Mammary epithelial cell (primary cell): ENCODE measurements at regions of chr3 and their contacts with region 1.

Region 1: GRCh38 chr3:140898340-140899180 is 43.1 kb upstream of the SLC25A36 start:
- DNase-seq: peak; percentile 75
- H3K4me3 ChIP-seq: no peak overlapping the region
- H3K27ac ChIP-seq: no peak overlapping the region
- H3K4me1 ChIP-seq: peaks cover 3% of the 10 kb centered on the region
- H3K27me3 ChIP-seq: peaks cover 2% of the 10 kb centered on the region
- CTCF ChIP-seq: peak; percentile 64 to 68

Region 2: DNA sequence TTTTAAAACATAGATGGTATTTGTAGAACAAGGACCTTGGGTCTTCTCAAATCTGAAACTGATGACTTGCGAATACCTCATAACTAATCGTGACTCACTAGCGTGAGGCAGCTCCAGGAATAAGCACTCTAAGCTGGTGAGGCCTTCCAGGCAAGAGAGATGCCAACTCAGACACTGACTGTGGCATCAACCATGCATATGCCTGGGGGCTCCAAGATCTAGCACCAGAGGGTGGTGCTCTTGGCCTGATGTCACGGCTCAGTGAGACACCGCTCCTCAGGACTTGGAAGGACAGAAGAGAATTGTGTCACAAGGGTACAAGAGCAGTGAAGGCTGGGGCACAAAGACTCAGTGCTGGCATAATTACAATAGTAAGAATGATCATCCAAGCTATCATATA is 345.7 kb before region 1 on chr3:
- CTCF ChIA-PET with region 1: no interaction called
- dilution Hi-C with region 1: no loop called
- in situ Hi-C with region 1: no loop called
- intact Hi-C with region 1: no loop called
- DNase-seq: peak; percentile 65
- H3K4me3 ChIP-seq: no peak overlapping the region
- H3K27ac ChIP-seq: no peak overlapping the region
- H3K4me1 ChIP-seq: no peaks in the 10 kb centered on the region
- H3K27me3 ChIP-seq: no peaks in the 10 kb centered on the region
- CTCF ChIP-seq: peak in 1 of 2 donors; percentile 13

Region 3: DNA sequence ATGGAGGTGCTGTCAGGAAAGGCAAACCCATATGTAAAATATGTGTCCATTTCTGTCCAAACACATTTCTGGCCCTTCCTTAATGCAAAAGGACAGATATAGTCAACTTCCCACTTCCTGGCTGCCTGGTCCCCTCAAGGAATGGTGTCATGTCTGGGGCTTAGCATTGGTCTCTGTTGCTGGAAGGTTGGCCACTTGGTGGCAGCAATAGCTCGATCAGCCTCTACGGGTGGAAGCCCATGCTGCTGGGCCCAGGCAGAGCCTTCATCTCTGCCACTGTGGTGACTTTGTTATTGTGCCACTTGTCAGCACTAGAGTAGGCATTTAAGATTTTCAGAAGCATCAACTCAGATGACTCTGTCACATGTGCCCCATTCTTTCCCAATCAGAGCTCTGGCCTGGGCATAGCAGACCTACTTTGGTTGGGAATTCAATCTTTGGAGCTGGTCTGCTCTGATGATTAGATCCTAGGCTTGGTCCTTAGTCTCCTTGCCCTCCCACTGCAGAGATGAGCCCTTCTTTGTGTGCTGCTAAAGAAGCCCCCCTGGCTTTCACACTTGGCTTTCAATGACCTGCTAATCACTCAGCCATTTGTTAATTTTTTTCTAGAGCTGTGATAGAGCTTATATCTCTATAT is 101.6 kb after region 1 on chr3:
- CTCF ChIA-PET with region 1: no interaction called
- dilution Hi-C with region 1: no loop called
- in situ Hi-C with region 1: no loop called
- intact Hi-C with region 1: loop called (anchors 2 kb)
- DNase-seq: peak; percentile 51
- H3K4me3 ChIP-seq: no peak overlapping the region
- H3K27ac ChIP-seq: no peak overlapping the region
- H3K4me1 ChIP-seq: no peaks in the 10 kb centered on the region
- H3K27me3 ChIP-seq: no peaks in the 10 kb centered on the region
- CTCF ChIP-seq: peak; percentile 66 to 88